A673 (cell line): ENCODE measurements at regions of chr3 and their contacts with region 1.

Region 1: GRCh38 chr3:1766384-1766783 is 332.3 kb upstream of the CNTN4 start:
- DNase-seq: peak; percentile 89
- H3K4me3 ChIP-seq: no peak overlapping the region
- H3K27ac ChIP-seq: no peak overlapping the region
- H3K4me1 ChIP-seq: no peaks in the 10 kb centered on the region
- H3K27me3 ChIP-seq: no peaks in the 10 kb centered on the region
- CTCF ChIP-seq: no peak

Region 2: GRCh38 chr3:1623896-1624295 is 142.5 kb before region 1 on chr3:
- CTCF ChIA-PET with region 1: no interaction called
- POLR2A ChIA-PET with region 1: no interaction called
- intact Hi-C with region 1: loop called (anchors 10 kb)
- DNase-seq: peak; percentile 76
- H3K4me3 ChIP-seq: no peak overlapping the region
- H3K27ac ChIP-seq: no peak overlapping the region
- H3K4me1 ChIP-seq: peaks cover 10% of the 10 kb centered on the region
- H3K27me3 ChIP-seq: no peaks in the 10 kb centered on the region
- CTCF ChIP-seq: no peak

Region 3: DNA sequence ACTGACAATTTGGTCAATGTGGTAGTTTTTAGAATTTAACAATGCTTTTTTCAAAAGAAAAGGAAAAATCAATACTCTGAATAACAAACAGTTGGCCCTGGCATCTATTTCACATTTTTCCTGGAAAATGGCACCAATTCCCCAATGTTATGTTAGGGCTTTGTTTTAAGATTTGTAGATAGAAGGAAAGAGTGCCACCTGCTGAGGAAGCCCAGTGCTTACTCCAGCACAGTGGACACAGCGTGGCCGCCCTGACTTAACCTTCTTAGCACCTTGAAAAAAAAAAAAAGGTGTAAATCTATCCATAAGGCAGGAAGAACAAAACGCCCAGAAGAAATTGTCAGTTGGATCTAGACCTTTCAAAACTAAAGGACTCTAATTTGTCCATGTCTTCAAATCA is 221.6 kb after region 1 on chr3:
- CTCF ChIA-PET with region 1: no interaction called
- POLR2A ChIA-PET with region 1: no interaction called
- intact Hi-C with region 1: loop called (anchors 10 kb)
- DNase-seq: no peak
- H3K4me3 ChIP-seq: no peak overlapping the region
- H3K27ac ChIP-seq: no peak overlapping the region
- H3K4me1 ChIP-seq: no peaks in the 10 kb centered on the region
- H3K27me3 ChIP-seq: no peaks in the 10 kb centered on the region
- CTCF ChIP-seq: peak; percentile 43

Region 4: GRCh38 chr3:2001306-2002108 is 235.1 kb after region 1 on chr3:
- CTCF ChIA-PET with region 1: no interaction called
- POLR2A ChIA-PET with region 1: no interaction called
- intact Hi-C with region 1: no loop called
- DNase-seq: no peak
- H3K4me3 ChIP-seq: no peak overlapping the region
- H3K27ac ChIP-seq: no peak overlapping the region
- H3K4me1 ChIP-seq: no peaks in the 10 kb centered on the region
- H3K27me3 ChIP-seq: no peaks in the 10 kb centered on the region
- CTCF ChIP-seq: no peak

Region 5: DNA sequence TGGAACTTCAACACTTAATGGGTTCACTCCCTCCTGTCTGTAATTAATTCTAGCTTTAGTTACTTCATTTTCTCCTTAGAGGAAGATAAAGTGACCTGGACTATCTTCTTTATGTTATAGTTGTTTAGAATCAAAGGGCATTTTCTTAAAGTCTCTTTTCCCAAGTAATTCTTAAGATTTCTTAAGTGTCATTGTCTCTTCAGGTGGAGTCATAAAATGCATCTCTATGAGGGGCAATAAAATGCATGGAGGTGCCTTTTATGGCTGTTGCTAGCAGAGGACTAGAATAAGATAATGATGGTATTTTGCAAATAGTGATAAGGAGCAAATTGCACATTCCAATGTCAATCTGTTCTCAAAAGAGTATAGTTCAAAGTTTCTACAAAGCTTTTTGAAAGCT is 366.8 kb after region 1 on chr3:
- CTCF ChIA-PET with region 1: no interaction called
- POLR2A ChIA-PET with region 1: no interaction called
- intact Hi-C with region 1: no loop called
- DNase-seq: no peak
- H3K4me3 ChIP-seq: no peak overlapping the region
- H3K27ac ChIP-seq: no peak overlapping the region
- H3K4me1 ChIP-seq: no peaks in the 10 kb centered on the region
- H3K27me3 ChIP-seq: no peaks in the 10 kb centered on the region
- CTCF ChIP-seq: no peak

Region 6: GRCh38 chr3:2774481-2775249 is 1008.3 kb after region 1 on chr3:
- CTCF ChIA-PET with region 1: no interaction called
- POLR2A ChIA-PET with region 1: no interaction called
- intact Hi-C with region 1: no loop called
- DNase-seq: no peak
- H3K4me3 ChIP-seq: no peak overlapping the region
- H3K27ac ChIP-seq: no peak overlapping the region
- H3K4me1 ChIP-seq: no peaks in the 10 kb centered on the region
- H3K27me3 ChIP-seq: no peaks in the 10 kb centered on the region
- CTCF ChIP-seq: no peak